Esophagus squamous epithelium (tissue), 5 donors: ENCODE measurements at regions of chr13 and their contacts with region 1.

Region 1: DNA sequence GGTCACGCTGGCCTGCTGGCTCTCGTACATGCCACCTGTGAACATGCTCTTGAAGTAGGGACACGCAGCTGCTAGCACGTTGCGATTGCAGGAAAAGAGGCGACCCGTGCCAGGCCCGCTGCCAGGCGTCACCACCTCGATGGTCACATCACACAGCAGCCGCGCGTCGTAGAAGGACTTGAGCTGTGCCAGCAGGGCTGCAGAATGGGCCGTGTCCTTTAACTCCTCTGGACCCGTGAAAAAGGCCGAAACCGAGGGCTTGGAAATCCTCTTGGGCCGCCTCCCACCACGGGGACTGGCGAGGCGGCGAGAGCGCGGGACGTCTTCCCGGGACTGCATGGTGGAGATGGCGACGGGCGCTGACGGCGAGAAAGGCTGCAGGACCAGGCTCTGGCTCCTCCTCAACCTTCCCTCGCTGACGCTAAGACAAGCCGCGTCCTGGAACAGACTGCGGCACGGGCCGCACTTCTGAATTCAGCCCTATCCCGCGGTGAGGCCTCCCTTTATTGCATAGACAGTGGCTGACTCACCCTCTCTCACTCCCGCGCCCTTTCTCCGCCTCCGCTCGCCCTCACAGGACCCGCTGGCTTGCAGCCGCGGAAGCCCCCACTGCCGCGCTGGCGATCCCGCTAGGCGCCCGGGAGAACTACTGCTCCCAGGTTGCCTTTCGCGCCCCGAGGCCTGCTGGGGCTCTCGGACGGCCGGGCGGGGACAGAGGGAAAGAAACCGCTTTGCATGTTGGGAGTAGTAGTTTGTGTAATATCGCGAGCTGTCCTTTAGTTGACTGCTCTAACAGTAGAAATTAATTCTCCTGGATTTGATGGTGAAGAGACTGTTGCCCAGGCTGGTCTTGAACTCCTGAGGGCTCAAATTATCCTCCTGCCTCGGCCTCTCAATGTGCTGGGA is at the start of gene KBTBD7:
- DNase-seq: peak; percentile 81
- H3K4me3 ChIP-seq: peak within 1 kb of the TSS; percentile 68 to 78 (median 74)
- H3K27ac ChIP-seq: peak within 1 kb of the TSS; percentile 83 to 90 (median 86)
- H3K4me1 ChIP-seq: peaks cover 10 to 28% (median 13%) of the 10 kb centered on the region in 3 donors
- H3K27me3 ChIP-seq: no peaks in the 10 kb centered on the region
- CTCF ChIP-seq: peak in 2 of 6 experiments; percentile 16 to 42
- POLR2A ChIP-seq: peak in 2 of 4 donors; percentile 28 to 38
- total RNA-seq, gene KBTBD7: 2.6 to 5.9 (median 4.1) TPM

Region 2: DNA sequence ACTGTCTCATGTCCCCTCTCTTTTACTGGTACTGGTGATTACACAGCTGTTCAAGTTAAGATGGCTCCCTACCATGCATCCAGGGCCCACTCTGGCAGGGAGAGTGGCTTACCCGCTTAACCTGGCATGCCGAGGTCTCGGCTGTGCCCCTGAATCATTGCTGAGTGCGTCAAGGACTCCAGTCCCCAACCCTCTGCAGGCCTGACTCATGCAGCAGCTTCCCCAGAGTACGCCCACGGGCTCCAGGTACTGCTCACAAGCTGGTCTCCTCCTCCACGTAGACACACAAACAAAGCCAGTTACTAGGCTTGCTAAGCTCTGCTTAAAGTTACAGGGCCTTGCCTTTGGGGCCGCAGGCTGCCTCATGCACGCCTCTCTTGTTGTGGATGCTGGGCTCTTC is 1091.3 kb before region 1 on chr13:
- intact Hi-C with region 1: no loop called
- DNase-seq: no peak
- H3K4me3 ChIP-seq: no peak overlapping the region
- H3K27ac ChIP-seq: peak overlapping the region; percentile 70 to 87 (median 78)
- H3K4me1 ChIP-seq: peaks cover 6 to 33% (median 19%) of the 10 kb centered on the region in 3 donors
- H3K27me3 ChIP-seq: no peaks in the 10 kb centered on the region
- CTCF ChIP-seq: no peak
- POLR2A ChIP-seq: no peak

Region 3: DNA sequence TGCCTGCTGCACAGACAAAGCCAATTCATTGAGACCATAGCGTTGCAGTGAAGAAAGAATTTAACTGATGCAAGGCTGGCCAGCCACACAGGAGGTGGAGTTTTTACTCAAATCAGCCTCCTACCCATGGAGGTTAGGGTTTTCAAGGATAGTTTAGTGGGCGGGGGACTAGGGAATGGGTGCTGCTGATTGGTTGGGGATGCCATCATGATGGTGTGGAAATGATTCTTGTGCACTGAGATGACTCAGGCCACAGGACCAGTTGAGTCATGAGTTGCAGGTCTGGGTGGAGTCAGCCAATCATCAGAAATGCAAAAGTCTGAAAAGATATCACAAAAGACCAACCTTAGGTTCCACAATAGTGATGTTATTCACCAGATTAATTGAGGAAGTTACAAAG is 887.4 kb before region 1 on chr13:
- intact Hi-C with region 1: no loop called
- DNase-seq: no peak
- H3K4me3 ChIP-seq: no peak overlapping the region
- H3K27ac ChIP-seq: no peak overlapping the region
- H3K4me1 ChIP-seq: no peaks in the 10 kb centered on the region
- H3K27me3 ChIP-seq: no peaks in the 10 kb centered on the region
- CTCF ChIP-seq: no peak
- POLR2A ChIP-seq: no peak

Region 4: DNA sequence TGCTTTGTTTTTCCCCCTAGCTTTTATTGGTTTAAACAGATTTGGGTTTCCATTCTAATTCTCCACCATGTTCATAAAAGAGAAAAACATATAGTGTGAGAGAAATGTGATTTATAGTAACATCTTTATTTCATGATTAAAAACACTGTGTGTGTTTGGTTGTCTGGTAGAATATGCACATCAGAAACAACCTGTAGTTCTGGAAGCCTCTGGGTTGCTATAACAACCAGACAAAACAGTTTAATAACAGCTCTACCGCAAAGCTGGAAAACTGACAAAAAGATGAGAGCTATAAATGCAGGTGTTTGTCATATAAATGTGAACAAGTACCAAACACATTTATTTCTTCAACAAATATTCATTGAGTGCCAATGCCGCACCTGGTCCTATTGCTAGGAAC is 71.3 kb before region 1 on chr13:
- intact Hi-C with region 1: loop called (anchors 10 kb)
- DNase-seq: no peak
- H3K4me3 ChIP-seq: no peak overlapping the region
- H3K27ac ChIP-seq: no peak overlapping the region
- H3K4me1 ChIP-seq: peaks cover 0 to 4% (median 0%) of the 10 kb centered on the region in 3 donors
- H3K27me3 ChIP-seq: no peaks in the 10 kb centered on the region
- CTCF ChIP-seq: no peak
- POLR2A ChIP-seq: no peak